Activated CD4-positive, alpha-beta memory T cell treated with anti-CD3 and anti-CD28 coated beads for 36 hours (primary cell): ENCODE measurements at regions of chr3 and their contacts with region 1.

Region 1: DNA sequence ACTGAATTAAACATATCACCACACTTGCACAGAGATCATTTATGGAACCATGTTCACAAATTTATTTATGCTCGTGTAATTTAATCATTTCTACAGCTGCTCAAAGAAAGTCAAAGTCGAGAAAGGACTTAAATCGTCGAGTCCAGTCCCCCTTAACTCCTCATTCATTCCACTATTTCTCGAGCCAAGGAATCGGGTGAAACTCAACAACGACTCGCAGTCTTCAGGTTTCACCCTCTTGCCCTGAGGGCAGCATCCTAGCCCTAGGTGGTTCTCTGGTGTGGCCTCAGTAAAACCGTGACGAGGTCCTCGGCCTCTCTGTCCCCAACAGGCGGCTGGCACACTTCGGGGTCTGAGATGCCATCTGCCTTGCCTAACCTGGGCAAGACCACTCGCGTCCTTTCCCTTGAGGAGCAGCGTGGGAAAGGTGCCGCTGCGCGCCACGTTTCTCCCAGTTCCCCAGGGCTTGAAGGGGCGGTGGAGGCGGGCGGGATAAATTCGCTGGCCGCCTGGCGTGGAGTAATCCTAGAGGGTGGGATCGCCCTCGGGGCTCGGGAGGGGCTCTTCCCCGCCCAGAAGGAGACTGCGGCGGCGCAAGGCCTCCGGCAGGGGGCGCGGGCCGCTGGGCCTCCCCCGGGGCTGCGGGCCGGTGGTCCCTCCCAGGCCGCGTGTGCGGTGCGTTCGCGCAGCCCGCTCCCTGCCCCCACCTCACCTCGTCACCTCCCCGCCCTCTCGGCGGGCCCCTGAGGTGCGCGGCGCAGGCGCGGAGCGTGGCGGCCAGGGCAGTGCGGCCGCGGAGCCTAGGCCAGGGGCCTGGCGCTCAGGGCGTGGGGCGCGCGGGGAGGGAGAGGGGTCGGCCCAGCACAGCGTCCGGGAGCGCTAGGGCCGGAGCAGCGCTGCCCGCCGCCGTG is at the start of gene ZNF639:
- DNase-seq: peak; percentile 86
- H3K4me3 Mint-ChIP-seq: peak within 1 kb of the TSS; percentile 90
- H3K27ac Mint-ChIP-seq: peak within 1 kb of the TSS; percentile 93
- H3K4me1 Mint-ChIP-seq: peaks cover 29% of the 10 kb centered on the region
- H3K27me3 Mint-ChIP-seq: no peaks in the 10 kb centered on the region
- total RNA-seq, gene ZNF639: 23.5 to 25.0 TPM

Region 2: GRCh38 chr3:179071550-179072397 is 250.8 kb before region 1 on chr3 and contains the start of gene ZMAT3:
- CTCF ChIA-PET with region 1: interaction called, 15 read pairs
- POLR2A ChIA-PET with region 1: interaction called, 4 read pairs
- intact Hi-C with region 1: loop called (anchors 2 kb)
- DNase-seq: peak; percentile 89
- H3K4me3 Mint-ChIP-seq: peak within 1 kb of the TSS; percentile 96
- H3K27ac Mint-ChIP-seq: peak within 1 kb of the TSS; percentile 89
- H3K4me1 Mint-ChIP-seq: peaks cover 35% of the 10 kb centered on the region
- H3K27me3 Mint-ChIP-seq: no peaks in the 10 kb centered on the region
- total RNA-seq, gene ZMAT3: 9.0 TPM

Region 3: GRCh38 chr3:179181021-179181472 is 141.5 kb before region 1 on chr3:
- CTCF ChIA-PET with region 1: no interaction called
- POLR2A ChIA-PET with region 1: no interaction called
- intact Hi-C with region 1: loop called (anchors 1 kb)
- DNase-seq: no peak
- H3K4me3 Mint-ChIP-seq: no peak overlapping the region
- H3K27ac Mint-ChIP-seq: no peak overlapping the region
- H3K4me1 Mint-ChIP-seq: peaks cover 40% of the 10 kb centered on the region
- H3K27me3 Mint-ChIP-seq: no peaks in the 10 kb centered on the region

Region 4: DNA sequence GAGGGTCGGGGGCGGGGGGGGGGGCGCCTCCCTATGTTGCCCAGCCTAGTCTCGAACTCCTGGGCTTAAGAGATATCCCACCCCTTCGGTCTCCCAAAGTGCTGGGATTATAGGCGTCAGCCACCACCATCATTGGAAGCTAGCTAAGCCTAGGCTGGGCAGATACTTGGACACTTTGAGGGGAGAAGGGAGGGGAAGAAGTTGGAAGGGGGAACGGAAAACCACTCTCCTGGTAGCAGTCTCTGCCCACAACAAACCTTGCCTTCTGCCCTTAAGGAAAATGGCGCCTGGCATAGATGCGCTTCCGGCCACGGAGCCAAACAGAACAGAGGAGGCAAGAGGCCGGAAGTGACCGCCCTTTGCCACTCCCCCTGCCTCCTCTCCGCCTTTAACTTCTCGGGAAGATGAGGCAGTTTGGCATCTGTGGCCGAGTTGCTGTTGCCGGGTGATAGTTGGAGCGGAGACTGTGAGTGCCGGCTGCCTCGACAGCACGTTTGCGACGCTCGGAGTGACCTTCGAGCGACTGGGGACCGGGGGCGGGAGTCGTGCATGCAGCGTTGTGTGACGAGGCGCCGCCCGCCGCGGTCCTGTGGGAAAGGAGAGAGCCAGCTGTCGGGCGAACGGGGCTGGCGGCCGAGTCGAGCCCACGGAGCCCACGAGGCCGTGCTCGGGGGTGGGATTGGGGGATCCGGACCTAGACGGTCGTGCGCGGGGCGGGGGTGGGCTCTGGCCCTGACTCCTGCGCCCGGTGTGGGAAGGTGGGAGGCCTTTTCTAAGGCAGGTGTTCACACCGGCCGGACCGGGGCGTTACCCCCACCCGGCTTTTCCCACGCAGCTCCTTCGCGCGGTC is 25.0 kb after region 1 on chr3 and contains the start of gene MFN1:
- CTCF ChIA-PET with region 1: interaction called, 4 read pairs
- POLR2A ChIA-PET with region 1: interaction called, 11 read pairs
- intact Hi-C with region 1: loop called (anchors 1 kb)
- DNase-seq: peak; percentile 94
- H3K4me3 Mint-ChIP-seq: peak within 1 kb of the TSS; percentile 98
- H3K27ac Mint-ChIP-seq: peak within 1 kb of the TSS; percentile 94
- H3K4me1 Mint-ChIP-seq: peaks cover 23% of the 10 kb centered on the region
- H3K27me3 Mint-ChIP-seq: no peaks in the 10 kb centered on the region
- total RNA-seq, gene MFN1: 31.1 to 31.3 TPM